B cell (primary cell): ENCODE measurements at regions of chr12 and their contacts with region 1.

Region 1: DNA sequence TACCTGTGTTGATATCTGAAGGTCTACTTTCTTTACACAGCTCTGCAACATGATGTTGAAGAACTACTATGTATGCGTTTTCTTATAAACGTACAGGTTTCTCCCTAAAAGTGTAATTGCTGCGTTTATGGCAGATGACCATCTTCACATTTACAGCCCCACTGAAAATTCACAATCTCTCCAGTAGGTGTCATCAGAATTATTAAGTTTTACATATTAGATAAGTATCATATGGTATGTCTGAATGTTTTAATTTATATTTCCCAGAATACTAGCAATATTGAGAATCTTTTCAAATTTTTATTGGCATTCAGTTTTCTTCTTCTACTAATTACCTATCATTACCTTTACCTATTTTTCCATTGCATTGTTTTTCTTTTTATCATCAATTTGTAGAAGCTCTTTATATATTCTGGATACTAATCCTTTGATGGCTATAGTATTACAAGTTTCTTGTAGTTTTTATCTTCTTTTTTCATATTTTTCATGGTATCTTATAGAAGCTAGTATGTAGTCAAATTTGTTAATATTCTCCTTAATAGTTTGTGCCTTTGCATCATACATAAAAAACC is 123.5 kb downstream of the CAPZA3 start:
- DNase-seq: no peak
- ATAC-seq: no peak
- H3K4me3 ChIP-seq: no peak overlapping the region
- H3K4me3 Mint-ChIP-seq: no peak overlapping the region
- H3K27ac ChIP-seq: no peak overlapping the region
- H3K27ac Mint-ChIP-seq: no peak overlapping the region
- H3K4me1 ChIP-seq: no peaks in the 10 kb centered on the region
- H3K4me1 Mint-ChIP-seq: no peaks in the 10 kb centered on the region
- H3K27me3 ChIP-seq: no peaks in the 10 kb centered on the region
- H3K27me3 Mint-ChIP-seq: no peaks in the 10 kb centered on the region
- CTCF ChIP-seq: no peak

Region 2: DNA sequence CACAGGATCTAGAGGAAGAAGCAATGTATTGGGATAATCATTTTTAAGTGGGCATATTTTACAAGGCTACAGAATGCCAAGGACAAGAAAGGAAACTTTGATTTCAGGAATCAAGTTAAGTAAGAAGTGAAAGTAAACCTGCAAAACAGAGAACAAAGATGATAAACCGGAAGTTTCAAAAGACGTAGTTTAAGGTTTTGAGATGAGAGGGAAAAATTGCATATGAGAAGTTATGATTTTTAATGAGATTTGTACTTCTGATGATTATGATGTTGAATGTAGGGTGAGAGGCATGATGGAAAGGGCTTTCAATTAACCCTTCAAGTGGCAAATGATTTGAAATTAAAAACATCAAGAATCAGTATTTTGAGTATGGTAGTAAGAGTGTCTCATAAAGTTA is 11.4 kb after region 1 on chr12:
- CTCF ChIA-PET with region 1: no interaction called
- POLR2A ChIA-PET with region 1: no interaction called
- intact Hi-C with region 1: no loop called
- DNase-seq: no peak
- ATAC-seq: no peak
- H3K4me3 ChIP-seq: no peak overlapping the region
- H3K4me3 Mint-ChIP-seq: no peak overlapping the region
- H3K27ac ChIP-seq: no peak overlapping the region
- H3K27ac Mint-ChIP-seq: no peak overlapping the region
- H3K4me1 ChIP-seq: no peaks in the 10 kb centered on the region
- H3K4me1 Mint-ChIP-seq: no peaks in the 10 kb centered on the region
- H3K27me3 ChIP-seq: no peaks in the 10 kb centered on the region
- H3K27me3 Mint-ChIP-seq: no peaks in the 10 kb centered on the region
- CTCF ChIP-seq: no peak

Region 3: DNA sequence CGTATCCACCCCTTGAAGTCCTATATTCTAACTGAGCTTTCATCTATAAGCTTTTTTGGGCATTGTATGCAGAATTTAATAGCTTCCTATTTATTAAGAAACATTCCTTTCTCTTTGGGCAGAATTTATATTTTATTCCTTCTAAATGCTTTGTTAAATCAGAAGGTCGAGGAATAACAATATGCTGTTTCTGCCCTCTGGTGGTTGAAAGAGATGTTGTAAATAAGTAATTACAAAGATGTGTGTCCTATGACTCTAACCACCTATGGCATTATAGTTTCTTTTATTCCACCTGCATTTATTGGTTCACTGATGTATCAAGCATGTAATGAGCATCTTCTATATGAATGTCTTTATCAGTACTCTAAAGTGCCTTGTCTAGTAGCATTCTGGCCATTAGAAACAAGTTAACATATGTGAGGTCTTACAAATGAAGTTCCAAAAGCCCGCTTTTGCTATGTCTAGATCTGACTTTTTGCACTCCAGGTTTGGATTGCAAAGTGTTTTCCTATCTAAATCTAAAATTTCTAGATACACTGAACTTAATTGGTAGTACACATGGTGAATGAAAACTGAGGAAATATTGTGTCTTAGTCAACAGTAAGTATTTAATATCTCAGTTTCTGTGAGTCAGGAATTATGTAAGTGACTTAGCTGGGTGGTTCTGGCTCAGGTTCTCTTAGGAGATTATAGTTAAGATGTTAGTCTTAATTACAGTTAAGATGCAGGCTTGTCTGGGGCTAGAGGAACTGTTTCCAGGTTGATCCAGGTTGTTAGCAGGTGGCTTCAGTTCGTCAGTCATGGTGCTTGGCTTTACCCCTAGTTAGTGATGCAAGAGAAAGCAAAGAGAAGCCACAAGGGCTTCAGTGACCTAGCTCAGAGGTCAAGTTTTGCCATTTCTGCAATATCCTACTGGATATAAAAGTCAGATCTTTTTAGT is 325.6 kb after region 1 on chr12:
- CTCF ChIA-PET with region 1: no interaction called
- POLR2A ChIA-PET with region 1: no interaction called
- intact Hi-C with region 1: loop called (anchors 5 kb)
- DNase-seq: peak; percentile 3
- ATAC-seq: no peak
- H3K4me3 ChIP-seq: no peak overlapping the region
- H3K4me3 Mint-ChIP-seq: no peak overlapping the region
- H3K27ac ChIP-seq: no peak overlapping the region
- H3K27ac Mint-ChIP-seq: no peak overlapping the region
- H3K4me1 ChIP-seq: no peaks in the 10 kb centered on the region
- H3K4me1 Mint-ChIP-seq: peaks cover 3% of the 10 kb centered on the region
- H3K27me3 ChIP-seq: no peaks in the 10 kb centered on the region
- H3K27me3 Mint-ChIP-seq: peaks cover 5% of the 10 kb centered on the region
- CTCF ChIP-seq: peak; percentile 48